ENCODE measurements at regions of chr6 and their contacts with region 1.

Region 1: GRCh38 chr6:78947962-78948361 is 80.6 kb downstream of the IRAK1BP1 start:
- DNase-seq: no peak
- ATAC-seq: no peak
- H3K4me3 ChIP-seq: no peak overlapping the region
- H3K27ac ChIP-seq: no peak overlapping the region
- H3K4me1 ChIP-seq: no peaks in the 10 kb centered on the region
- H3K27me3 ChIP-seq: no peaks in the 10 kb centered on the region
- CTCF ChIP-seq: no peak
- EP300 ChIP-seq: no peak
- POLR2A ChIP-seq: no peak
- RAD21 ChIP-seq: no peak

Region 2: GRCh38 chr6:78936515-78936914 is 11.4 kb before region 1 on chr6:
- CTCF ChIA-PET with region 1: no interaction called
- POLR2A ChIA-PET with region 1: no interaction called
- RAD21 ChIA-PET with region 1: no interaction called
- SMC1A ChIA-PET with region 1: interaction called, 11 read pairs
- in situ Hi-C with region 1: no loop called
- intact Hi-C with region 1: no loop called
- DNase-seq: no peak
- ATAC-seq: no peak
- H3K4me3 ChIP-seq: no peak overlapping the region
- H3K27ac ChIP-seq: no peak overlapping the region
- H3K4me1 ChIP-seq: no peaks in the 10 kb centered on the region
- H3K27me3 ChIP-seq: no peaks in the 10 kb centered on the region
- CTCF ChIP-seq: no peak
- EP300 ChIP-seq: no peak
- POLR2A ChIP-seq: no peak
- RAD21 ChIP-seq: no peak

Region 3: GRCh38 chr6:79421707-79422484 is 473.9 kb after region 1 on chr6:
- CTCF ChIA-PET with region 1: no interaction called
- POLR2A ChIA-PET with region 1: no interaction called
- RAD21 ChIA-PET with region 1: no interaction called
- SMC1A ChIA-PET with region 1: no interaction called
- in situ Hi-C with region 1: no loop called
- intact Hi-C with region 1: no loop called
- DNase-seq: peak; percentile 12
- ATAC-seq: peak; percentile 78
- H3K4me3 ChIP-seq: no peak overlapping the region
- H3K27ac ChIP-seq: no peak overlapping the region
- H3K4me1 ChIP-seq: no peaks in the 10 kb centered on the region
- H3K27me3 ChIP-seq: no peaks in the 10 kb centered on the region
- CTCF ChIP-seq: no peak
- EP300 ChIP-seq: 0 out of 4 replicates have a peak, but pooled peaks of 1 of the 2 experiments have one; percentile 23
- POLR2A ChIP-seq: no peak
- RAD21 ChIP-seq: no peak

Measured in GM12878 (cell line).